WTC11 (cell line): ENCODE measurements at regions of chr6 and their contacts with region 1.

Region 1: GRCh38 chr6:73329201-73329600 is 24.9 kb downstream of the DPPA5 start:
- DNase-seq: no peak
- ATAC-seq: no peak
- H3K4me3 Mint-ChIP-seq: no peak overlapping the region
- H3K27ac Mint-ChIP-seq: no peak overlapping the region
- H3K4me1 Mint-ChIP-seq: peaks cover 10% of the 10 kb centered on the region
- H3K27me3 Mint-ChIP-seq: no peaks in the 10 kb centered on the region
- CTCF ChIP-seq: no peak

Region 2: DNA sequence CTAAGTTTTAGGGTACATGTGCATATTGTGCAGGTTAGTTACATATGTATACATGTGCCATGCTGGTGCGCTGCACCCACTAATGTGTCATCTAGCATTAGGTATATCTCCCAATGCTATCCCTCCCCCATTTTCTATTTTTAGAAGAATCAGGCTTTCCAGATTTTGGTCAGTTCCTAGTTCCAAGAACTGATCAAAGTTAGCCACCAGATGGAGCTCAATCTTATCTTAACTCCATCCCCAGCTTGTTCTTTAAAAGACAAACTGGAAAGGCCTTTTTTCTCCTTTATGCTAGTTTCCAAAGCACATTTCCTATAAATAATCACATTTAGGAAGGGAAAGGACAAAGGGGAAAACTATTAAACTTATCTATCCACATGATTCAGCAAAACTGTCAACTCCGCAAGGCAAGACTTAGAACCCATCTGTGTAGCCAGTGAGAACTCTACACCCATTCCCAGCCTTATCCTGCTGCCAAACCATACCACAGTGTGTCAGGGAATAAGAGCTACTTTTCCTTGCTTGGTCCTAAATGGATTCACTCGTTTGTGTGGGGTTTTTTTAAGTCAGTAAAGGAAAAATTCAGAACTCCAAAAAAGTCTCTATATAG is 43.4 kb before region 1 on chr6:
- CTCF ChIA-PET with region 1: interaction called, 66 read pairs
- POLR2A ChIA-PET with region 1: interaction called, 7 read pairs
- DNase-seq: no peak
- ATAC-seq: peak; percentile 84
- H3K4me3 Mint-ChIP-seq: no peak overlapping the region
- H3K27ac Mint-ChIP-seq: no peak overlapping the region
- H3K4me1 Mint-ChIP-seq: peaks cover 9% of the 10 kb centered on the region; the same call in 1 of the 2 replicates
- H3K27me3 Mint-ChIP-seq: no peaks in the 10 kb centered on the region
- CTCF ChIP-seq: no peak

Region 3: DNA sequence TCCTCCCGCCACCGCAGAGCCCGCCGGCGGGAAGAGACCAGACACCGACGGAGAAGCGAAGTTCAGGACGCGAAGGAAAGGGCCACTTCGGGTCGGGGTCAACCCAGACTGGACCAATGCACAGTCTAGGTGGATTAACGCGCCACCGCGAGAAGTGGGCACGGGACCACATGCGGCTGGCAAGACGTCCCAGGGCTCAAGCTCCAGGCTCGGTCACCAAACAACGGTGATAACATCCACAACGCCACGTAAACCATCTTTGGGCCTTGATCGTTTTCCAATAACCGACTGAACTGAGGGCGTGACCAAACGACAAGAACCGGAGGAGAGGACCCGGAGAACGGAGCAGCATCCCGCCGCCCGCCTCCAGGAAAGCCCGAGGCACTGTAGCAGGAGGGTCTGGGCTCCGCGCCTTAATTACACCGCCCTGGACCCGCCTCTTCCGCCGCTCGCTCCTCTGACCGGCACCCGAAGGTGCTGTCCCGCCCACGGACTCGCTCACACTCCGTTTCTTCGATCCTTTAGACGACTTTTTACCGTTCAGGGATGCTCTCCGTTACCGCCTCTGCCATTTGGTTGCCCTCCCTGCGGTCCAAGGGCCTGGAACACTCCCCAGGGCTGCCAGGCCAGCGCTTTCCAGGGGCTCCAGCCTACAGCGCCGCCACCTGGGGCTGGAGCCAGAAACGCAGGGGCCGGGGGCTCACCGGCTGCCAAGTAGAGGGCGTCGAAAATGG is 19.3 kb before region 1 on chr6:
- CTCF ChIA-PET with region 1: interaction called, 35 read pairs
- POLR2A ChIA-PET with region 1: no interaction called
- DNase-seq: peak; percentile 68
- ATAC-seq: peak; percentile 78
- H3K4me3 Mint-ChIP-seq: peak overlapping the region; percentile 95
- H3K27ac Mint-ChIP-seq: peak overlapping the region; percentile 93
- H3K4me1 Mint-ChIP-seq: peaks cover 24% of the 10 kb centered on the region
- H3K27me3 Mint-ChIP-seq: peaks cover 38% of the 10 kb centered on the region
- CTCF ChIP-seq: no peak

Region 4: DNA sequence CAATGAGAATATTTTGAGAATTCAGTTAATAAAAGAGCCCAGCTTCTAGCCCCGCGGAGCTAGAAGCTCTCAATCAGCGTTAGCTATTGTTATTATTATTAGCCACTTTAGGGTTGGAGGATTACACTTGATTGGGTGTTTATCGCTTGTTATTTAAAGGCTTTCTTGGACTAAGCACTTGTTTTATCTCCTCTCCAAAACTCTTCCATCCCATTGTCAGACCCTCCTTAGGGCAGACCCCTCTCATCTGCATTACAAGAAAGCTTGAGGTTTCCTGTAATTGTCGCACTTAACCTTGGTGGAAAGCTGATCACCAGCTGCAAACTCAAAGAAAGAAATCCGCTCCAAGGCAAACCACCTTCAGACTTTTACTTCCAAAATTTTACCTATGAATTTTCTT is 20.1 kb after region 1 on chr6:
- CTCF ChIA-PET with region 1: interaction called, 17 read pairs
- POLR2A ChIA-PET with region 1: interaction called, 4 read pairs
- DNase-seq: no peak
- ATAC-seq: peak; percentile 82
- H3K4me3 Mint-ChIP-seq: peak overlapping the region; percentile 32
- H3K27ac Mint-ChIP-seq: peak overlapping the region; percentile 93
- H3K4me1 Mint-ChIP-seq: peaks cover 54% of the 10 kb centered on the region
- H3K27me3 Mint-ChIP-seq: peaks cover 9% of the 10 kb centered on the region
- CTCF ChIP-seq: no peak